Pancreas (tissue), 10 donors: ENCODE measurements at regions of chr19 and their contacts with region 1.

Region 1: DNA sequence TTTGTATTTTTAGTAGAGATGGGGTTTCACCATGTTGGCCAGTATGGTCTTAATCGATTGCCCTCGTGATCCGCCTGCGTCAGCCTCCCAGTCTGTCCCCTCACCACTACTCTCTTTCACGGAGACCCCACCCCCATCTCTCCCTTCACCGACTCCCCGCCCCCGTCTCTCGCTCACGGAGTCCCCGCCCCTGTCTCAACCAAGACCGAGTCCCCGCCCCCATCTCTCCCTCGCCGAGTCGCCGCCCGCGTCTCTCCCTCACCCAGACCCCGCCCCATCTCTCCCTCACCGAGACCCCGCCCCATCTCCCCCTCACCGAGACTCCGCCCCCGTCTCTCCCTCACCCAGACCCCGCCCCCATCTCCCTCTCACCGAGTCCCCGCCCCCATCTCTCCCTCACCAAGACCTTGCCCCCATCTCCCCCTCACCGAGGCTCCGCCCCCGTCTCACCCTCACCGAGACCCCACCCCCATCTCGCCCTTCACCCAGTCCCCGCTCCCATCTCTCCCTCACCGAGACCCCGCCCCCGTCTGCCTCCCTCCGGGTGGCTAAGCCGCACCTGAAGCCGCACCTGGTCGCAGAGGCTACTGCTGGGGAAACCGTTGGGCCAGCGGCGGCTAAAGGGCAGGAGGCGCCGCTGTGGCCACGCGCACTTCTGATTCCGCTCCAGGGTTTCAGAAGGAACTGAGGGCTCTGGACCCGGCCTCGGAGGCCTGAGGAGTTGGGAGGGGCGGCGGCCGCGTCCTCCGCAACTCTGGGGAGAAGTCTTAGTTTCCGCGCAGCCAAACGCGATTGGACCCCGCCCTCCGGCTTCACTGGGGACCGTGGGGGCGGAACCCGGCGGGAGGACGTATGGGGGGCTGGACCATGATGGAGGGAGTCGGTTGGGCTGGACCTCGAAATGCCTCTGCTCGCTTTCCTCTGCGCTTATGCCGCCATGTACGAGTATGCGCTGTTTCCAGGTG is 17.1 kb upstream of the ZNF846 start:
- DNase-seq: peak; percentile 89 to 100 (median 97)
- ATAC-seq: peak; percentile 90 to 93 (median 92)
- H3K4me3 ChIP-seq: peak overlapping the region; percentile 34 to 72 (median 54)
- H3K27ac ChIP-seq: peak overlapping the region; percentile 84 to 98 (median 92)
- H3K4me1 ChIP-seq: peaks cover 0 to 7% (median 4%) of the 10 kb centered on the region in 3 donors
- H3K27me3 ChIP-seq: no peaks in the 10 kb centered on the region
- CTCF ChIP-seq: no peak

Region 2: DNA sequence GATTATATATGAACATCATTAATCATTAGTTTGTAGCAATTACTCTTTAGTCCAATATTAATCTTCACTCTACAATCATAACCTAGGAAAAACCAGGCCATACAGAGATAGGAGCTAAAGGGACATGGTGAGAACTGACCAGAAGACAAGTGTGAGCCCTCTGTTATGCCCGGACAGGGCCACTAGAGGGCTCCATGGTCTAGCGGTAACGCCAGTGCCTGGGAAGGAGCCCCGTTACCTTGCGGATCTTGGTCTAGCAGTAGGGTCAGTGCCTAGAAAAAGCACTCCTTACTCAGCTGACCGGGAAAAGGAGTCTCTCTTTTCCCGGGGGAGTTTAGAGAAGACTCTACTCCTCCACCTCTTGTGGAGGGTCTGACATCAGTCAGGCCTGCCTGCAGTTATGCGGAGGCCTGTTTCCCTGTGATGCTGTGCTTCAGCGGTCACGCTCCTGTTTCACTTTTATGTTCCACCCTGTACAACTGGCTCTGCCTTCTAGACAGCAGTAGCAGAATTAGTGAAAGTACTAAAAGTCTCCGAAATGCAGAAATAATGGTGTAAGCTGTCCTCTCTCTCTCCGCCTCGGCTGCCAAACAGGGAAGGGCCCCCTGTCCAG is 580.0 kb before region 1 on chr19:
- intact Hi-C with region 1: loop called in 2 of 3 experiments (anchors 10 kb)
- DNase-seq: peak; percentile 45 to 86 (median 71)
- ATAC-seq: peak in 3 of 4 donors; percentile 89 to 96 (median 89)
- H3K4me3 ChIP-seq: peak overlapping the region in 1 of 4 donors; percentile 17
- H3K27ac ChIP-seq: no peak overlapping the region
- H3K4me1 ChIP-seq: no peaks in the 10 kb centered on the region
- H3K27me3 ChIP-seq: peaks cover 0 to 4% (median 0%) of the 10 kb centered on the region in 4 donors
- CTCF ChIP-seq: peak; percentile 54 to 93 (median 84)

Region 3: GRCh38 chr19:9627856-9628255 is 157.8 kb before region 1 on chr19:
- intact Hi-C with region 1: loop called in 1 of 3 experiments (anchors 5 kb)
- DNase-seq: no peak
- ATAC-seq: no peak
- H3K4me3 ChIP-seq: no peak overlapping the region
- H3K27ac ChIP-seq: no peak overlapping the region
- H3K4me1 ChIP-seq: no peaks in the 10 kb centered on the region
- H3K27me3 ChIP-seq: no peaks in the 10 kb centered on the region
- CTCF ChIP-seq: no peak

Region 4: GRCh38 chr19:9966448-9967143 is 180.9 kb after region 1 on chr19:
- intact Hi-C with region 1: no loop called
- DNase-seq: no peak
- ATAC-seq: no peak
- H3K4me3 ChIP-seq: no peak overlapping the region
- H3K27ac ChIP-seq: no peak overlapping the region
- H3K4me1 ChIP-seq: no peaks in the 10 kb centered on the region
- H3K27me3 ChIP-seq: no peaks in the 10 kb centered on the region
- CTCF ChIP-seq: no peak